AG04449 (cell line): ENCODE measurements at regions of chr7 and their contacts with region 1.

Region 1: GRCh38 chr7:131007394-131008330 is 273.7 kb upstream of the KLF14 start:
- DNase-seq: no peak
- H3K4me3 ChIP-seq: no peak overlapping the region
- CTCF ChIP-seq: peak; percentile 50

Region 2: DNA sequence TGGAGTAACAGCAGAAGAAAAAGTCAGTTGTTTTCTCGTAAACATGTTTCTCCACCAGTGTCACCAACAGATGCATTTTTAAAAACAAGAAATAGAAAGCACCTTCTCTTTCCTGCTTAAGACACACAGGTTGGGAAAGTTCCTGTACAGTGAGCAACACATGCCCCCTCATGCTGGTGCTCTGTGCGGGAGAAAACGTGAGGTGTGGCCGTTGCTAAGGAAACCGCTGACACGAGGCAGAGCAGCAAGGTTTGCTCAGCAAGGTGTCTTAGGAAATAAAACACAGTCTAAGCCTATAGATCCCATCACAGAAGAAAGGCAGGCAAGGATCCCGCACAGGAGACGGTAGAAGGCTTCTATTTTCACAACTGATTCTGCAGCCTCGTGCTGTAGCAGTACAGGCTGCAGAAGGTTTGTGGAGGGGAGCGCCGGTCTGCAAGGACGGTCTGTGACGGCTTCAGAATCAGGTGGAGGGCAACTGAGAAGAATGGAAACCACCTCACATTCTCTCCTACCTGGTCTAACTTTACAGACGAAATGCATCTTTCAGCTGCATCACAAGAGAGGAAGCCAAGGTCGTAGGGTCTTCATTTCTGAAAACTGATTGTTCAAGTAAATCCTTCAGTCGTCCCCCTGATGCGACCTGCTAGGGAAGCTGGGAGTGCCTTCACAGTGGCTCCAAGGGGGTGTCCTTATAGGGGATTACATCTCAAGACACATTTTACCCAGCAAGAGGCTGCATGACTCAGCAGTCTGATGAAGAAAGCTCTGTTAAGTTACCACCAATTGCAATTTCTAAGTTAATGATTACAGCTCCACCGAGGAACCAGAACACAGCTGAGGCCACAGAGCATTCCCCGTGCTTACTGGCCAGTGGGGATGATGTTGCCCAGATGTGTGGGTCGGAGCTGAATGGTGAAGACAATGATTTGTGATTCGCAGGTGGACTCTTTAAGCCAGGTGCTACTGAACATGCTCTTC is 122.9 kb before region 1 on chr7:
- CTCF ChIA-PET with region 1: interaction called, 10 read pairs
- POLR2A ChIA-PET with region 1: no interaction called
- DNase-seq: no peak
- H3K4me3 ChIP-seq: no peak overlapping the region
- CTCF ChIP-seq: no peak

Region 3: GRCh38 chr7:130904031-130904757 is 103.5 kb before region 1 on chr7:
- CTCF ChIA-PET with region 1: interaction called, 10 read pairs
- POLR2A ChIA-PET with region 1: interaction called, 3 read pairs
- DNase-seq: peak; percentile 91
- H3K4me3 ChIP-seq: peak overlapping the region; percentile 36
- CTCF ChIP-seq: no peak

Region 4: DNA sequence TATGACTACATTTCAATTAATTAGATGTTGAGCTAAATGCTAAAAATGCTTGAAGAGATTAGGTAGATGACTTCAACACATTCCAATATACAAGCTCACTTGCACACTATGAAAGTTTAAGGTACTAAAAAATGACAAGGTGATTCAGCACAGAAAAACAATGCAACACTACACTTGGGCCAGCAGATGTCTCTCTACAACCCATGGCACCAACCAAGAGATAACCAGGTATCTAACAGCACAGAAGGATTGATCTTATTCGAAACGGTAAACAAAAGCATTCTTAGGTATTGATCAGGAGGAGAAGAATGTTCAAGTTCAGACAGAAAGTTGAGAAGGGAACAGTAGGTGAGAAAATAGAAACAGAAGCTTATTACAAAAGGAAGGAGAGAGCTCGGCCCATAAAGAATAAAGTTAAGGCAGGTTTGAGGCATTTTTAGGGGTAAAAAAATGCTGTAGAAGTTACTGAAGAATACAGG is 25.5 kb before region 1 on chr7:
- CTCF ChIA-PET with region 1: interaction called, 48 read pairs
- POLR2A ChIA-PET with region 1: no interaction called
- DNase-seq: no peak
- H3K4me3 ChIP-seq: no peak overlapping the region
- CTCF ChIP-seq: peak; percentile 63

Region 5: GRCh38 chr7:130988443-130988842 is 19.2 kb before region 1 on chr7:
- CTCF ChIA-PET with region 1: interaction called, 48 read pairs
- POLR2A ChIA-PET with region 1: no interaction called
- DNase-seq: no peak
- H3K4me3 ChIP-seq: no peak overlapping the region
- CTCF ChIP-seq: no peak

Region 6: GRCh38 chr7:130996841-130997231 is 10.8 kb before region 1 on chr7:
- CTCF ChIA-PET with region 1: interaction called, 15 read pairs
- POLR2A ChIA-PET with region 1: no interaction called
- DNase-seq: no peak
- H3K4me3 ChIP-seq: no peak overlapping the region
- CTCF ChIP-seq: no peak

Region 7: GRCh38 chr7:131131746-131132431 is 124.2 kb after region 1 on chr7:
- CTCF ChIA-PET with region 1: no interaction called
- POLR2A ChIA-PET with region 1: no interaction called
- DNase-seq: no peak
- H3K4me3 ChIP-seq: no peak overlapping the region
- CTCF ChIP-seq: no peak

Region 8: GRCh38 chr7:131235489-131236317 is 228.0 kb after region 1 on chr7:
- CTCF ChIA-PET with region 1: no interaction called
- POLR2A ChIA-PET with region 1: no interaction called
- DNase-seq: peak; percentile 92
- H3K4me3 ChIP-seq: no peak overlapping the region
- CTCF ChIP-seq: no peak